ENCODE measurements at regions of chr9 and their contacts with region 1.

Region 1: GRCh38 chr9:426264-426663 is 211.6 kb downstream of the DOCK8 start:
- DNase-seq: no peak
- H3K27ac ChIP-seq: no peak overlapping the region
- CTCF ChIP-seq: no peak

Region 2: DNA sequence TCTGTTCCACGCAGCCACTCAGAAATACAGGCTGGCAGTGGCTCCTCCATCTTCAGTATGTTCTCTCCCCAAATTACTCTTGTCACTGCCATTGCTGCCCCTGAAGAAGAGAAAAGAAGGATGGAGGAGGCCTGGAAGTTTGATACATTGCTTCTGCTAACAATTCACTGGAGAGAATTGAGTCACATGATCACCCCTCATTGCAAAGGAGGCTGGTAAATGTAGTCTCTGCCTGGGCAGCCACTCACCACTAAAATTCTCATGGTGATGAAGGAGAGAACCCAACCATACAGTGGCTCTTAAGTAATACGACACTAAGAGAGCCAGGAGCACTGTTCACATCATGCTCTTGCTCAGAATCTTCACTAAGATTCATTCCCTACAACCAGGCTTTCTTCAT is 99.6 kb before region 1 on chr9:
- CTCF ChIA-PET with region 1: no interaction called
- POLR2A ChIA-PET with region 1: interaction called, 11 read pairs
- DNase-seq: no peak
- H3K27ac ChIP-seq: no peak overlapping the region
- CTCF ChIP-seq: no peak

Measured in RWPE1 (cell line).